B cell (primary cell): ENCODE measurements at regions of chr12 and their contacts with region 1.

Region 1: DNA sequence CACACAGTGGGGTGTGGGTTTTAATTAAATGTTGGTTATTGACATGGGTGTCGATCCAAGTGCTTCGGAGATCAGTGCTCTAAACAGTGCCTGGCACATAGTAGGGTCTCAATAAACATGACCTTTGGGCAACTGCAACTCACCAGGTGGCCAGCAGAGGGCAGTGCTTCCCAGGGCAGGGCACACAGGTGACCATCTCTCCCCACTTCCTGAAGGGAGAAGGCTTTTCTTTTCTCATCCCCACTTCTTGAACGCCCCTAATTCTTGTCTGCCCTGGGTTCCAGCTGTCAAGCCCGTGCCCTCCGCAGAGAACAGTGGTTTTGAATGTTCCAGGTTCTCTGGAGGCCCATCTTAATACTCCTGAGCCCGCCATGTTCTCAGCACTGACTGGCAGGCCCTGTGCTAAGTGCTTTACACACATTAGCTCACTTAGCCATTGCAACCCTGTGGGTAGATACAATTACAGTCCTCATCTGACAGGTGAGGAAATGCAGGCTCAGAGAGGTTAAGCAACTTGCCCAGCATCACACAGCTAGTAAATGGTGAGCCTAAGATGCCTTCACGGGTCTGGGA is 16.3 kb downstream of the RAPGEF3 start:
- DNase-seq: peak; percentile 78
- ATAC-seq: peak; percentile 18
- H3K4me3 ChIP-seq: no peak overlapping the region
- H3K4me3 Mint-ChIP-seq: no peak overlapping the region
- H3K27ac ChIP-seq: no peak overlapping the region
- H3K27ac Mint-ChIP-seq: peak overlapping the region; percentile 75
- H3K4me1 ChIP-seq: peaks cover 43 to 61% of the 10 kb centered on the region in 2 donors
- H3K4me1 Mint-ChIP-seq: peaks cover 65% of the 10 kb centered on the region
- H3K27me3 ChIP-seq: no peaks in the 10 kb centered on the region
- H3K27me3 Mint-ChIP-seq: no peaks in the 10 kb centered on the region
- CTCF ChIP-seq: peak; percentile 98

Region 2: GRCh38 chr12:47276621-47277309 is 465.6 kb before region 1 on chr12:
- CTCF ChIA-PET with region 1: no interaction called
- POLR2A ChIA-PET with region 1: no interaction called
- intact Hi-C with region 1: no loop called
- DNase-seq: peak; percentile 64
- ATAC-seq: peak; percentile 90
- H3K4me3 ChIP-seq: peak overlapping the region in 2 of 5 experiments; percentile 20 to 31
- H3K4me3 Mint-ChIP-seq: peak overlapping the region; percentile 72
- H3K27ac ChIP-seq: peak overlapping the region; percentile 70 to 88
- H3K27ac Mint-ChIP-seq: peak overlapping the region; percentile 94
- H3K4me1 ChIP-seq: peaks cover 49 to 51% of the 10 kb centered on the region in 2 donors
- H3K4me1 Mint-ChIP-seq: peaks cover 65% of the 10 kb centered on the region
- H3K27me3 ChIP-seq: no peaks in the 10 kb centered on the region
- H3K27me3 Mint-ChIP-seq: no peaks in the 10 kb centered on the region
- CTCF ChIP-seq: no peak

Region 3: DNA sequence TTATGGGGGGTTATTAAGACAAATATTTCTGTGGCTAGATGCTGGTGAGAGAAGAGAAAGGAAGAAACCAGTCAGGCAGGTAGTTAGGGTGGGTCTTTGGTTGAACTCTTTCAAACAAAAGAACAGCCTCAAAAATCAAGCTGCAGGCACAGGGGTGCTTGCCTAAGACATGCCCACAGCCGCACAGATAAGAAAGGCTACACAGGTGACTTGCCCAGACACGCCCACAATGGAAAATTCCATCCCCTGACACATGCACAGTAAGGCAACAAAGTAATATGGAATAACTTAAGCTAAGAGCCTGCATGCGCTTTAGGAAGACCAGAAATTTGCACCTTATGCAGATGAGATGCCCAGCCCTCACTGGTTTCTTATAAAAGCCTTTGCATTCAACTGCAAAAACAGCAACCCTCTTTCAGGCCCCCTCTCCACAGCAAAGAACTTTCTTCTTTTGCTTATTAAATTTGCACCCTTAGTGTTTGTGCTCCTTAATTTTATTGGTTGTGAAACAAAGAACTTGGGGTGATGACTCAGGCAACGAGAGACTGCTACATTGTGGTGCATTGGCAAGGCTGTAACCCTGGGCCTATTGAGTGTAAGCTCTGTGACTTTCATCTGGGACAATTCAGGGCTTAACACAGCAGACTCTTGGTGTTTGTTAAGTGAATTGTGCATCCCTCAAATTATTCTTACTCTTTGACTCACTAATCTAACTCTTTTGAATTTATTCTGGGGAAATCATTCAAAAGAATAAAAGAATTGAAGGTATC is 185.9 kb before region 1 on chr12:
- CTCF ChIA-PET with region 1: no interaction called
- POLR2A ChIA-PET with region 1: no interaction called
- intact Hi-C with region 1: no loop called
- DNase-seq: no peak
- ATAC-seq: no peak
- H3K4me3 ChIP-seq: no peak overlapping the region
- H3K4me3 Mint-ChIP-seq: no peak overlapping the region
- H3K27ac ChIP-seq: no peak overlapping the region
- H3K27ac Mint-ChIP-seq: no peak overlapping the region
- H3K4me1 ChIP-seq: no peaks in the 10 kb centered on the region
- H3K4me1 Mint-ChIP-seq: no peaks in the 10 kb centered on the region
- H3K27me3 ChIP-seq: peaks cover 0 to 3% (median 0%) of the 10 kb centered on the region in 4 experiments
- H3K27me3 Mint-ChIP-seq: no peaks in the 10 kb centered on the region
- CTCF ChIP-seq: no peak

Region 4: DNA sequence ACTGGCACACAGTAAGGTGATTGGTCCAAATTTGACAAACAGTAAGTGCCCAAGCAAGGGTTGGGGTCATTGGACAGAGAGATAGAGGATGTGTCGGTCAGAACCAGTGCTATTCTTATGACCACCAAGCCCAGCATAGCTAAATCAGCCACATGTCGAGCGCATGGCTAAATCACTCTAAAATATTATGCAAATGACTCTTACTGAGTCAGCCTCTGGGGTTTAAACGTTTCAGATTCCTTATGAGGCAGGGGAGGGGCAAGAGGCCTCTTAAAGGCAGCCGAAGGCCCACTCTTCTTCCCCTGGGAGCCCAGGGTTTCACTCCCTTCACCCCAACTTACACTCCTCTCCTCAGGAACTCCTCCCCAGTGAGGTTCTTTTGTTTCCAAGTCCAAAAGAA is 16.4 kb before region 1 on chr12:
- CTCF ChIA-PET with region 1: interaction called, 130 read pairs
- POLR2A ChIA-PET with region 1: interaction called, 6 read pairs
- intact Hi-C with region 1: no loop called
- DNase-seq: no peak
- ATAC-seq: peak; percentile 82
- H3K4me3 ChIP-seq: no peak overlapping the region
- H3K4me3 Mint-ChIP-seq: peak overlapping the region; percentile 5
- H3K27ac ChIP-seq: no peak overlapping the region
- H3K27ac Mint-ChIP-seq: no peak overlapping the region
- H3K4me1 ChIP-seq: peaks cover 9 to 20% of the 10 kb centered on the region in 2 donors
- H3K4me1 Mint-ChIP-seq: peaks cover 24% of the 10 kb centered on the region
- H3K27me3 ChIP-seq: no peaks in the 10 kb centered on the region
- H3K27me3 Mint-ChIP-seq: no peaks in the 10 kb centered on the region
- CTCF ChIP-seq: no peak

Region 5: GRCh38 chr12:47773062-47773857 is 30.9 kb after region 1 on chr12 and contains the start of gene SLC48A1:
- CTCF ChIA-PET with region 1: interaction called, 515 read pairs
- POLR2A ChIA-PET with region 1: interaction called, 4 read pairs
- intact Hi-C with region 1: no loop called
- DNase-seq: peak; percentile 88
- ATAC-seq: peak; percentile 92
- H3K4me3 ChIP-seq: peak within 1 kb of the TSS in 4 of 5 experiments; percentile 39 to 75 (median 62)
- H3K4me3 Mint-ChIP-seq: peak within 1 kb of the TSS; percentile 93
- H3K27ac ChIP-seq: peak within 1 kb of the TSS; percentile 53 to 54
- H3K27ac Mint-ChIP-seq: peak within 1 kb of the TSS; percentile 86
- H3K4me1 ChIP-seq: peaks cover 6 to 27% of the 10 kb centered on the region in 2 donors
- H3K4me1 Mint-ChIP-seq: peaks cover 24% of the 10 kb centered on the region
- H3K27me3 ChIP-seq: no peaks in the 10 kb centered on the region
- H3K27me3 Mint-ChIP-seq: no peaks in the 10 kb centered on the region
- CTCF ChIP-seq: peak; percentile 36
- total RNA-seq, gene SLC48A1: 20.0 and 25.1 TPM in 2 replicates

Region 6: DNA sequence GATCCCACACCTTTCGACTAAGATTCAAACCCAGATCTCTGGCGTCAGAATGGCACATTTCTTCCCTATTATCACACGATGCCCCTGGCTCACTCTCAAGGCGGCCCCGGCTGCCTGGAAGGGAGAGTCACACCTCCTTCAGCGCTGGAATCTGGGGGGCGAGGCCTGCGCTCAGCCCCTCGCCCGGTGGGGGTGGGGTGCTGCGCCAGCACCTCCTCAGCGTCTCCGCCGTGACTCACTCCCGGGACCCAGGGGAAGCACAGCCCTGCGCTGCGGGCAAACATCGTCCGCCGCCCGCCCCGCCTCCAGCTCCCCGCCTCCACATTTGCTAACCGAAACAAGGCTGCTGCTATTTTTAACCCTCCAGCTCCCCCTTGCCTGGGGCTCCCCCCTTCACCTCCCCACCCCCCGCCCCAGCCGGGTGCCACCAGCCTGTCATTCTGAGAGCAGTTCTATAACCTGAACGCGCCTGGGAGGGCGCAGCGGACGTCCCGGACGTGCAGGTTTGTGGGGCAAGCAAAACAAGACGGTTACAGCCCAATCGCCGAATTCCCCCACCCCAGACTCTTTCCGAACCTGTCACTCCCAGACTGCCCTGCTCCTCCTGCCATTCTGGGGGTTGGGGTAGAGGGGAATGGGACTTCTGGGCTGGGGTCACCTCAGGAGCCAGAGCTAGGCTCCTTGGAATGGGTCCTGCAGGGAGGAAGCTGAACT is 70.6 kb after region 1 on chr12:
- CTCF ChIA-PET with region 1: interaction called, 10 read pairs
- POLR2A ChIA-PET with region 1: interaction called, 4 read pairs
- intact Hi-C with region 1: no loop called
- DNase-seq: peak; percentile 94
- ATAC-seq: peak; percentile 72
- H3K4me3 ChIP-seq: peak overlapping the region; percentile 53 to 68 (median 61)
- H3K4me3 Mint-ChIP-seq: peak overlapping the region; percentile 85
- H3K27ac ChIP-seq: peak overlapping the region; percentile 96 to 98
- H3K27ac Mint-ChIP-seq: peak overlapping the region; percentile 96
- H3K4me1 ChIP-seq: peaks cover 91 to 97% of the 10 kb centered on the region in 2 donors
- H3K4me1 Mint-ChIP-seq: peaks cover 94% of the 10 kb centered on the region
- H3K27me3 ChIP-seq: no peaks in the 10 kb centered on the region
- H3K27me3 Mint-ChIP-seq: no peaks in the 10 kb centered on the region
- CTCF ChIP-seq: no peak

Region 7: GRCh38 chr12:47837190-47838171 is 95.1 kb after region 1 on chr12:
- CTCF ChIA-PET with region 1: interaction called, 351 read pairs
- POLR2A ChIA-PET with region 1: interaction called, 28 read pairs
- intact Hi-C with region 1: loop called (anchors 1 kb)
- DNase-seq: peak; percentile 84
- ATAC-seq: peak; percentile 50
- H3K4me3 ChIP-seq: no peak overlapping the region
- H3K4me3 Mint-ChIP-seq: peak overlapping the region; percentile 49
- H3K27ac ChIP-seq: no peak overlapping the region
- H3K27ac Mint-ChIP-seq: peak overlapping the region; percentile 77
- H3K4me1 ChIP-seq: peaks cover 46 to 53% of the 10 kb centered on the region in 2 donors
- H3K4me1 Mint-ChIP-seq: peaks cover 53% of the 10 kb centered on the region
- H3K27me3 ChIP-seq: no peaks in the 10 kb centered on the region
- H3K27me3 Mint-ChIP-seq: no peaks in the 10 kb centered on the region
- CTCF ChIP-seq: peak; percentile 95